ENCODE measurements at regions of chr19 and their contacts with region 1.

Region 1: GRCh38 chr19:55216461-55217198 is 7.3 kb upstream of the PTPRH start:
- DNase-seq: peak; percentile 88 to 99 (median 92)
- ATAC-seq: peak; percentile 83
- H3K4me3 ChIP-seq: peak overlapping the region; percentile 57
- H3K27ac ChIP-seq: peak overlapping the region; percentile 93
- H3K4me1 ChIP-seq: peaks cover 18 to 20% of the 10 kb centered on the region in 2 experiments; a peak in 4 of 5 replicates
- H3K27me3 ChIP-seq: no peaks in the 10 kb centered on the region
- CTCF ChIP-seq: no peak
- EP300 ChIP-seq: peak; percentile 94
- POLR2A ChIP-seq: peak; percentile 86
- RAD21 ChIP-seq: peak in 1 of 2 experiments; percentile 40; a peak in 2 of 4 replicates

Region 2: DNA sequence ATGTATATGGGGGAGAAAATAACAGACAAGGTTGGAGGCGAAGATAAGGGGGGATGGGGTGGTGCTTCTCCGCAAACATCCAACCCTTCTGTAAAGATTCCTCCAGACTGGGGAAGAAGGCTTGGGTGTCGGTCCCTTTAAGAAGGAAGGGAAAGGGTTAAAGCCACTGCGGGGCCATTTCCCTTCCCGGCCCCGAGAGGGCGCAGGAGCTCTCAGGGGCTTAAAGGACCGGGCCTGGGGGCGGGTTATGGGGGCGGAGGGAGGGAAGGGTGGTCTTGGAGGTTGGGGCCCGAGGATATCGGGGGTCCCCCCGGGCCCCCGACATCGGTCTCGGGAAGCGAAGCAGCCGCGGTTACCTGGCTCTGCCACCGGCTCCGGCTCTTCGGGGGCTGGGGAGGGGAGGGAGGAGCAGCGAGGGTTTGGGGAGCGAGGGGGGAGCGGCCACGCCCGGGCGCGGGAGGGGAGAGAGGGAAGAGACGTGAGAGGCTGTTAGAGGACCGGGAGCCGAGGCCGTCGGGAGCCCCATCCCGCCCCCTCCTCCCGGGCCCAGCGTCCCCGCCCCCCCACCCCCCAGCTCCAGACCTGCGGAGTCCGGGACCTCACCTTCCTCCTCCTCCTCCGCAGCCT is 70.4 kb before region 1 on chr19:
- CTCF ChIA-PET with region 1: no interaction called
- POLR2A ChIA-PET with region 1: no interaction called
- in situ Hi-C with region 1: no loop called
- intact Hi-C with region 1: no loop called
- DNase-seq: peak; percentile 88 to 92 (median 90)
- ATAC-seq: peak; percentile 87
- H3K4me3 ChIP-seq: peak overlapping the region; percentile 88
- H3K27ac ChIP-seq: peak overlapping the region; percentile 69
- H3K4me1 ChIP-seq: peaks cover 16 to 54% of the 10 kb centered on the region in 2 experiments
- H3K27me3 ChIP-seq: no peaks in the 10 kb centered on the region
- CTCF ChIP-seq: peak; percentile 84 to 93 (median 85)
- EP300 ChIP-seq: peak; percentile 57; the same call in 1 of the 2 replicates
- POLR2A ChIP-seq: no peak
- RAD21 ChIP-seq: peak; percentile 43 to 53

Region 3: DNA sequence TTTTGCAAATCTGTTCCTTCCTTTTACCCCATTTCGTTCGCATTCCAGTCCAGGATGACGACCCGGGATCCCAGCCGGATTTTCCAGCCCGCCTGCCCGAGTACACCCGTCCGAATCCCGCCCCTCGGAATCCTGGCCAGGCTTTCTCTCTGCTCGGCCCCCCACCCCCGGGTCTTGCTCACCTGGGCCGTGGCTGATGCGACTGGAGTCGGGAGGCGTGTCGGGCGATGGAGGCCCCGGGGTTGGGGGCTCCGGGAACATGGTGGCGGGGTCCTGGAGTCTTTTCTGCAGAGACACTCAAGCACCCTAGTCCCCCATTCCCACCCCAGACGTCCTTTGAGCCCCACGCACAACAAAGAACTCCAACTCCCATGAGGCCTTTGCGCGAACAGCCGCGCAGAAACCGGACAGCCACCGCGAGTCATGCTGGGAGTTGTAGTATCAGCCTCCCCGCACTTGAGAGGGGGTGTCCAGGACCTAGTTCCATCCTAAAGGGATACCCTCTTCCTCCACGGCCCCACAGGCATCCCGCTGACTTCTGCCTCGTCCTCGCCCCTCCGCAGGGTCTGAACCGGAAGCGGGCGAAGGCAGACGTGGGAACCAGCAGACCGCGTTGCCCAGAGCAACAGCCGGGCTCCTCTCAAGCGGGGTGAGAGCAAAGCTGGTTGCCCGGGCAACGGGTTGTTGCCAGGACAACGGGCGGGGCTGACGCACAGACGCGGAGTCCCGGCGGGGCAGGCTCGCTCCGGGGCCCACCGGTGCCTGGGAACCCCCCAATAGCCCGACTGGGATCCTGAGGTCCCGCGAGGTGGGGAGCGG is 37.6 kb before region 1 on chr19:
- CTCF ChIA-PET with region 1: no interaction called
- POLR2A ChIA-PET with region 1: interaction called, 8 read pairs
- in situ Hi-C with region 1: no loop called
- intact Hi-C with region 1: loop called (anchors 2 kb)
- DNase-seq: peak; percentile 81 to 85 (median 84)
- ATAC-seq: peak; percentile 65
- H3K4me3 ChIP-seq: peak overlapping the region; percentile 35
- H3K27ac ChIP-seq: no peak overlapping the region
- H3K4me1 ChIP-seq: peaks cover 29 to 41% of the 10 kb centered on the region in 2 experiments
- H3K27me3 ChIP-seq: no peaks in the 10 kb centered on the region
- CTCF ChIP-seq: no peak; a peak in 1 of 6 replicates
- EP300 ChIP-seq: 0 out of 2 replicates have a peak, but pooled peaks have one; percentile 2
- POLR2A ChIP-seq: no peak
- RAD21 ChIP-seq: no peak

Region 4: GRCh38 chr19:55258828-55259539 is 42.4 kb after region 1 on chr19 and contains the start of gene PPP6R1:
- CTCF ChIA-PET with region 1: no interaction called
- POLR2A ChIA-PET with region 1: interaction called, 32 read pairs
- in situ Hi-C with region 1: no loop called
- intact Hi-C with region 1: loop called (anchors 1 kb)
- DNase-seq: peak; percentile 97 to 99 (median 98)
- ATAC-seq: peak; percentile 90
- H3K4me3 ChIP-seq: peak within 1 kb of the TSS; percentile 94
- H3K27ac ChIP-seq: peak within 1 kb of the TSS; percentile 97
- H3K4me1 ChIP-seq: peaks cover 34 to 53% of the 10 kb centered on the region in 2 experiments; a peak in 4 of 5 replicates
- H3K27me3 ChIP-seq: no peaks in the 10 kb centered on the region
- CTCF ChIP-seq: no peak
- EP300 ChIP-seq: peak; percentile 86
- POLR2A ChIP-seq: peak; percentile 92
- RAD21 ChIP-seq: peak; percentile 53 to 57
- polyA plus RNA-seq, gene PPP6R1: 0.48 to 0.89 TPM

Region 5: GRCh38 chr19:55279770-55280643 is 63.4 kb after region 1 on chr19 and contains the start of gene HSPBP1:
- CTCF ChIA-PET with region 1: no interaction called
- POLR2A ChIA-PET with region 1: interaction called, 4 read pairs
- in situ Hi-C with region 1: no loop called
- intact Hi-C with region 1: loop called (anchors 2 kb)
- DNase-seq: peak; percentile 91 to 97 (median 94)
- ATAC-seq: peak; percentile 92
- H3K4me3 ChIP-seq: peak within 1 kb of the TSS; percentile 65
- H3K27ac ChIP-seq: peak within 1 kb of the TSS; percentile 79
- H3K4me1 ChIP-seq: peaks cover 19 to 28% of the 10 kb centered on the region in 2 experiments
- H3K27me3 ChIP-seq: no peaks in the 10 kb centered on the region
- CTCF ChIP-seq: 0 out of 6 replicates have a peak, but pooled peaks of 1 of the 3 experiments have one; percentile 1
- EP300 ChIP-seq: no peak
- POLR2A ChIP-seq: peak; percentile 76
- RAD21 ChIP-seq: no peak
- polyA plus RNA-seq, gene HSPBP1: 0.83 to 1.5 TPM

Region 6: GRCh38 chr19:55385740-55386529 is 169.3 kb after region 1 on chr19 and contains the start of gene RPL28:
- CTCF ChIA-PET with region 1: no interaction called
- POLR2A ChIA-PET with region 1: interaction called, 12 read pairs
- in situ Hi-C with region 1: no loop called
- intact Hi-C with region 1: loop called (anchors 2 kb)
- DNase-seq: peak; percentile 85 to 99 (median 91)
- ATAC-seq: peak; percentile 80
- H3K4me3 ChIP-seq: peak within 1 kb of the TSS; percentile 77
- H3K27ac ChIP-seq: peak within 1 kb of the TSS; percentile 97
- H3K4me1 ChIP-seq: peaks cover 54 to 66% of the 10 kb centered on the region in 2 experiments
- H3K27me3 ChIP-seq: no peaks in the 10 kb centered on the region
- CTCF ChIP-seq: no peak
- EP300 ChIP-seq: peak; percentile 3; the same call in 1 of the 2 replicates
- POLR2A ChIP-seq: peak; percentile 99
- RAD21 ChIP-seq: no peak
- polyA plus RNA-seq, gene RPL28: 257 to 287 TPM

Measured in K562 (cell line).